AG04450 (cell line): ENCODE measurements at regions of chr20 and their contacts with region 1.

Region 1: GRCh38 chr20:62616728-62617621 is 25.3 kb upstream of the SLCO4A1 start:
- DNase-seq: peak; percentile 21
- H3K4me3 ChIP-seq: no peak overlapping the region
- H3K27ac ChIP-seq: no peak overlapping the region
- H3K27me3 ChIP-seq: peaks cover 13% of the 10 kb centered on the region
- CTCF ChIP-seq: peak; percentile 94

Region 2: GRCh38 chr20:61773081-61773631 is 843.8 kb before region 1 on chr20:
- CTCF ChIA-PET with region 1: no interaction called
- POLR2A ChIA-PET with region 1: no interaction called
- DNase-seq: no peak
- H3K4me3 ChIP-seq: no peak overlapping the region
- H3K27ac ChIP-seq: no peak overlapping the region
- H3K27me3 ChIP-seq: no peaks in the 10 kb centered on the region
- CTCF ChIP-seq: no peak

Region 3: DNA sequence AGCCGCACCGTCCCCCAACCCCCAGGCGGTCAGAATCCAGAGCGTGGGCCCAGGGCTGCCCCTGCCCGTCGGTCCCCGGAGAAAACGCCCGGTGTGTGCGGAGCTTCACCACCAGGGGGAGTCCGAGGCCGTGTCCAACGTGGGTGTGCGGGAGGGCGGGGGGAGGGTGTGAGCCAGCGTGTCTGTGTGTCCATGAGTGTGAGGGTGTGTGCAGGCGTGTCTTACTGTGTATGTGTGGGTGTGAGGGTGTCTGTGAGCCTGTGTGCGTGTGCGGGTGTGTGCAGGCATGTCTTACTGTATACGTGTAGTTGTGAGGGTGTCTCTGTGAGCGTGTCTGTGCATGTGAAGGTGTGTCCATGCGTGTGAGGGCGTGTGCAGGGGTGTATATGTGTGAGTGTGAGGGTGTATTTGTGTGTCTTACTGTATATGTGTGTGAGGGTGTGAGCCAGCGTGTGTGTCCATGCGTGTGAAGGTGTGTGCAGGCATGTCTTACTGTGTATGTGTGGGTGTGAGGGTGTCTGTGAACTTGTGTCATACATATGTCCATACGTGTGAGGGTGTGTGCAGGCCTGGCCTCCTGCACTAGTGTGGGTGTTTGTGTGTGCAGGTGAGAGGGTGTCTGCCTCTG is 116.6 kb before region 1 on chr20:
- CTCF ChIA-PET with region 1: interaction called, 18 read pairs
- POLR2A ChIA-PET with region 1: no interaction called
- DNase-seq: no peak
- H3K4me3 ChIP-seq: no peak overlapping the region
- H3K27ac ChIP-seq: no peak overlapping the region
- H3K27me3 ChIP-seq: peaks cover 5% of the 10 kb centered on the region
- CTCF ChIP-seq: peak; percentile 75

Region 4: GRCh38 chr20:62651285-62652021 is 34.5 kb after region 1 on chr20:
- CTCF ChIA-PET with region 1: no interaction called
- POLR2A ChIA-PET with region 1: no interaction called
- DNase-seq: no peak
- H3K4me3 ChIP-seq: no peak overlapping the region
- H3K27ac ChIP-seq: peak overlapping the region; percentile 65
- H3K27me3 ChIP-seq: no peaks in the 10 kb centered on the region
- CTCF ChIP-seq: no peak